Activated naive CD4-positive, alpha-beta T cell treated with anti-CD3 and anti-CD28 coated beads for 36 hours (primary cell): ENCODE measurements at regions of chr3 and their contacts with region 1.

Region 1: GRCh38 chr3:100400780-100401673 is at the starts of genes LNP1 and TOMM70:
- DNase-seq: peak; percentile 98
- H3K4me3 Mint-ChIP-seq: peak within 1 kb of the TSS; percentile 95
- H3K27ac Mint-ChIP-seq: peak within 1 kb of the TSS; percentile 98
- H3K4me1 Mint-ChIP-seq: peaks cover 59% of the 10 kb centered on the region
- H3K27me3 Mint-ChIP-seq: no peaks in the 10 kb centered on the region
- total RNA-seq, gene LNP1: 2.2 to 2.4 TPM
- total RNA-seq, gene TOMM70: 48.5 to 48.6 TPM

Region 2: DNA sequence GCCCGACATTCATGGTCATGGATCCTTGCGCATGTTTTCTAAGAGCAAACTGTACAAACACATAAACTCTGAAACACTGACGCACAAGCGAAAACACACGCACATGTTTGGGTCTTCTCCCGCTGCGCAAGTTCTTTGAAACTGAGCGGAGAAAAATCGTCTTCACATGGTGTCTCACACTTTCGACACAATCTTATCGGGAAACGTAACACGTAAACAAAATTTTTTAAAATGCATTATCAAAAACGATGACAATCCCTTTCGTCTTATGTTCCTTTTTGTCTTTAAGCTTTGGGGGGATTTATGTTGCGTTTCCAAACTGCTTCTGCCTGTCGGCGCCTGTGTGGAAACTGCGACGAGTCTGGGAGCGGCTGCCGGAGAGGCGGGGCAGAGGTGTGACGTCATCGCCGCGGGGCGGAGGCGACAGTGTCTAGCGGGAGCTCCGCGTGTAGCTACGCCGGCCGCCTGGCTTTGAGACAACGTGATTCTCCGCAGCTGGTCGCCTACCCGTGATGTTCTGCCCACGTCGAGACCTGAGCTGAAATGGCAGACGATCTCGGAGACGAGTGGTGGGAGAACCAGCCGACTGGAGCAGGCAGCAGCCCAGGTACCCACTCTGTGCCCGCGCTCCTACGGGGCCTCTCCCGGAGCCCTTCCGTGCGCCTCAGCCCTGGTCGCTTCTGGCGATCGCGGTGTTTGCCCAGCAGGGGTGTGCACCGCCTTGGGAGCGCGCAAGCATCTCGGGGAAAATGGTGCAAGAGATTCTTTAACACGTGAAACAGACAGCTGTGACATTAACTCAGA is 583.4 kb before region 1 on chr3 and contains the start of gene CMSS1:
- CTCF ChIA-PET with region 1: no interaction called
- intact Hi-C with region 1: loop called (anchors 1 kb)
- DNase-seq: peak; percentile 95
- H3K4me3 Mint-ChIP-seq: peak within 1 kb of the TSS; percentile 98
- H3K27ac Mint-ChIP-seq: peak within 1 kb of the TSS; percentile 98
- H3K4me1 Mint-ChIP-seq: peaks cover 39% of the 10 kb centered on the region
- H3K27me3 Mint-ChIP-seq: no peaks in the 10 kb centered on the region
- total RNA-seq, gene CMSS1: 95.8 to 106 TPM

Region 3: DNA sequence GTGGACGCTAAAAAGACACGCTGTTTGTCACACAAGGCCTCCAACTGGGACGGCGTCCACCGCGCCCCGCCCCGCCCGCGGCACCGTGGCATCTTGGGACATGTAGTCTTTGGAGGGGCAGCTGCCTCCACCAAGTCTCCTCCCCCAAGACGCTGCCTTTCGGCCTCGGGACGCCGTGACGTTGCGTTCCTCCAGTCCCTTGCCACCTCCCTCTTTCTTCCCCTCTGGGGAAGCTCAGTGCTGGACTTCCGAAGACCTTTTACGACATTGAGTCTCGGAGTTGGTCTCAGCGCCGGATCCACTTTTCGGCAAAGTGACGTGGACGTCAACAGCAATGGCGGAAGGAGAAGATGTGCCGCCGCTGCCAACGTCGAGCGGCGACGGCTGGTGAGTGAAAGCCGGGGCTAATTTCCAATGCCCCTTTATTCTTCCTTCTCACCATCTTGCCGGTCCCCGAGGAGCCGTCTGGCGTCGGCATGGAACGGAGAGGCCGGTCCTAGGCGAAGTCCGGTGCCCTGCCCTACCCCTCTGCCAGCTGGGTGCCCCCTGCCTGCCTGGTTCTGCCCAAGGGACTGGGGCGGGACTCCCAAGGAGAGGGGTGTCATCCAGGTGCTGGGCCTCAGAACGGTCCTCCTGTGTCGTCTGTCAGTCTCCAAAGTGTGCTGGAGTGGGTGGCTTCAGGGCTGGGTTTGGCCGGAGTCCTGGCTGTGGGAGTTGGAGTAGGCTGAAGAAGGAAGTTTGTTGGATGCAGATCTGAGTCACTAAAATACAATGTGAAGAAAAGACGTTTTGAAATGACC is 140.1 kb before region 1 on chr3 and contains the start of gene TBC1D23:
- CTCF ChIA-PET with region 1: no interaction called
- intact Hi-C with region 1: loop called (anchors 1 kb)
- DNase-seq: peak; percentile 98
- H3K4me3 Mint-ChIP-seq: peak within 1 kb of the TSS; percentile 86
- H3K27ac Mint-ChIP-seq: peak within 1 kb of the TSS; percentile 89
- H3K4me1 Mint-ChIP-seq: peaks cover 59% of the 10 kb centered on the region
- H3K27me3 Mint-ChIP-seq: no peaks in the 10 kb centered on the region
- total RNA-seq, gene TBC1D23: 14.1 to 15.8 TPM

Region 4: DNA sequence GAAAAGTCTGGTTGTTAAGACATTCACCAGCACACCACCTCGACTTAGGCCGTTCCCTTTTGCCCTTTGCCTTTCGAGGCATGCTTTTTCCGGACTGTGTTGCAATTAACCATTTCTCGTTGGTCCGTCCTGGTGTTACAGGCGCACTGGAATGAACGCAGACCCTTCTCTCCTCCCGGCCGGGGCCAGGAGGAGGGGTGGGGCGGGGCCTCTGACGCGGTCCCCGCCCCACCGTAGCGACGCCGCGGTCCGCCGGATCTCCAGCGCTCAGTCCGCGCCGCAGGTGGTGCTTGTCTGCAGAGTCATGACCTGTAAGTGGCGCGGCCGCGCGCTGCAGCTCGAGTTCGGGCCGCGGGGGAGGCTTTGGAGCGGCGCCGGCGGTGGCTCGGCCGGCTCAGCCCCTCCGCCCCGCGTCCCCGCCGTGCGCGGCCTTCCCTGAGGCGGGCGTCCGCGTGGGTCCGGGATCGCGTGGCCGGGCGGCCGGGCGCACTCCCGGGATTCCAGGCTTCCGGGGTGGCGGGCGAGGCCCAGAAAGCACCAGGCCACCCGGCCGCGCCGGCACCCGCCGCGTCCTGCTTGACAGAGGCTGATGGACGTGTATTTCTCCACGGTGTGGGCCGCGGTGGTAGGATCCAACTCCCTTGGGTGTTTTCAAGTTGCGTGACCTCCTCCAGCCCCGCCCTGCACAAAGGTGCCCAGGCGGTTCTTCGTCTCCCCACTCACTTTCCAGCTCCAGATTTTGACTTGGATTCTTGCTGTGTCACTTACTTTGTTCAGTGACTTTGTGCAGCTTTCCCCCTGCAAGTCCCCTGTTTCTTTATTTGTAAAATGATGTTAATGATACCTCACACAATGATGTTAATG is 66.3 kb before region 1 on chr3 and contains the start of gene NIT2:
- CTCF ChIA-PET with region 1: interaction called, 3 read pairs
- intact Hi-C with region 1: loop called (anchors 1 kb)
- DNase-seq: peak; percentile 82
- H3K4me3 Mint-ChIP-seq: peak within 1 kb of the TSS; percentile 86
- H3K27ac Mint-ChIP-seq: peak within 1 kb of the TSS; percentile 86
- H3K4me1 Mint-ChIP-seq: peaks cover 26% of the 10 kb centered on the region
- H3K27me3 Mint-ChIP-seq: no peaks in the 10 kb centered on the region
- total RNA-seq, gene NIT2: 69.1 to 76.0 TPM

Region 5: GRCh38 chr3:100590114-100590839 is 189.2 kb after region 1 on chr3:
- CTCF ChIA-PET with region 1: interaction called, 3 read pairs
- intact Hi-C with region 1: loop called (anchors 1 kb)
- DNase-seq: peak; percentile 79
- H3K4me3 Mint-ChIP-seq: peak overlapping the region; percentile 11
- H3K27ac Mint-ChIP-seq: no peak overlapping the region
- H3K4me1 Mint-ChIP-seq: peaks cover 3% of the 10 kb centered on the region
- H3K27me3 Mint-ChIP-seq: no peaks in the 10 kb centered on the region

Region 6: GRCh38 chr3:100656945-100657344 is 255.9 kb after region 1 on chr3:
- CTCF ChIA-PET with region 1: no interaction called
- intact Hi-C with region 1: no loop called
- DNase-seq: no peak
- H3K4me3 Mint-ChIP-seq: no peak overlapping the region
- H3K27ac Mint-ChIP-seq: no peak overlapping the region
- H3K4me1 Mint-ChIP-seq: no peaks in the 10 kb centered on the region
- H3K27me3 Mint-ChIP-seq: no peaks in the 10 kb centered on the region

Region 7: GRCh38 chr3:101219842-101220560 is 819.0 kb after region 1 on chr3:
- CTCF ChIA-PET with region 1: no interaction called
- intact Hi-C with region 1: loop called (anchors 1 kb)
- DNase-seq: peak; percentile 8
- H3K4me3 Mint-ChIP-seq: no peak overlapping the region
- H3K27ac Mint-ChIP-seq: peak overlapping the region; percentile 61
- H3K4me1 Mint-ChIP-seq: peaks cover 16% of the 10 kb centered on the region
- H3K27me3 Mint-ChIP-seq: no peaks in the 10 kb centered on the region

Region 8: DNA sequence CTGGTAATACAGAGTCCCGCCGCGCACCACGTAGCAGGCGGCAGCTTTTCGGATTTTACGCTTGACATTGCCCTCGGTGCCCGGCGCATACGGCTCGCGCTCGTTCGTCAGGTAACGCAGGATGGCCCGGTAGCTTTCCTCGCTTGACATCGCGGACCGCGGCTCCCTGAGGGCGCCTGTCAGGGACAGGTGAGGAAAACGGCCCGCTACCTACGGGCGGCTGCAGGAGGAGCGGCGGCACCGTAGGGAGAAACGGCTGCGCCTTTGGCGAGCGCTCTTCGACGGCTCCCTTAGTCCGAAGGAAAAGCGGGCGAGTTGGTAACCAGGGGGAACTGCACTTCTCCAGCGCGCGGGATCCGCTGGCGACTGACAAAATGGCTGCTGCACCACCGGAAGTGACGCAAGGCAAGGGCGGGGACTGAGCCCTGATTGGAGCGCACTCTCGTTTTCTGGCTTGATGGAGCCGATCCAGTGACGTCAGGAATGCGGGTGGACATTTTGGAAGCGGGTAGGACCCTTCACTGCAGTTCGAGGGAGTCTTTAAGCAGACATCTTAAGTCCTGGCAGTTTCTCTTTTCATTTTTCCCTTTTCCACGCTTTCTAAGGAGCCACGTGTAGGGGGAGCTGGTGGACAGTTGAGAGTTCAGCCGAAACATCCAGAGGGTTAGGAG is 1275.9 kb after region 1 on chr3 and contains the start of gene ZBTB11:
- CTCF ChIA-PET with region 1: no interaction called
- intact Hi-C with region 1: loop called (anchors 2 kb)
- DNase-seq: peak; percentile 100
- H3K4me3 Mint-ChIP-seq: peak within 1 kb of the TSS; percentile 87
- H3K27ac Mint-ChIP-seq: peak within 1 kb of the TSS; percentile 95
- H3K4me1 Mint-ChIP-seq: peaks cover 54% of the 10 kb centered on the region
- H3K27me3 Mint-ChIP-seq: no peaks in the 10 kb centered on the region
- total RNA-seq, gene ZBTB11: 31.2 to 31.7 TPM